Activated B cell treated with CpG ODN at 0.5 μM for 24 hours (primary cell): ENCODE measurements at regions of chr7 and their contacts with region 1.

Region 1: GRCh38 chr7:94509879-94510581 is 421 bp downstream of the CASD1 start:
- DNase-seq: peak; percentile 73
- ATAC-seq: peak; percentile 80
- H3K4me3 Mint-ChIP-seq: peak overlapping the region; percentile 87
- H3K27ac Mint-ChIP-seq: peak overlapping the region; percentile 88
- H3K4me1 Mint-ChIP-seq: peaks cover 46% of the 10 kb centered on the region
- H3K27me3 Mint-ChIP-seq: no peaks in the 10 kb centered on the region
- CTCF ChIP-seq: no peak

Region 2: GRCh38 chr7:94160719-94161435 is 349.2 kb before region 1 on chr7:
- CTCF ChIA-PET with region 1: no interaction called
- POLR2A ChIA-PET with region 1: no interaction called
- intact Hi-C with region 1: loop called (anchors 10 kb)
- DNase-seq: no peak
- ATAC-seq: peak; percentile 79
- H3K4me3 Mint-ChIP-seq: peak overlapping the region; percentile 78
- H3K27ac Mint-ChIP-seq: peak overlapping the region; percentile 89
- H3K4me1 Mint-ChIP-seq: peaks cover 41% of the 10 kb centered on the region
- H3K27me3 Mint-ChIP-seq: no peaks in the 10 kb centered on the region
- CTCF ChIP-seq: no peak

Region 3: DNA sequence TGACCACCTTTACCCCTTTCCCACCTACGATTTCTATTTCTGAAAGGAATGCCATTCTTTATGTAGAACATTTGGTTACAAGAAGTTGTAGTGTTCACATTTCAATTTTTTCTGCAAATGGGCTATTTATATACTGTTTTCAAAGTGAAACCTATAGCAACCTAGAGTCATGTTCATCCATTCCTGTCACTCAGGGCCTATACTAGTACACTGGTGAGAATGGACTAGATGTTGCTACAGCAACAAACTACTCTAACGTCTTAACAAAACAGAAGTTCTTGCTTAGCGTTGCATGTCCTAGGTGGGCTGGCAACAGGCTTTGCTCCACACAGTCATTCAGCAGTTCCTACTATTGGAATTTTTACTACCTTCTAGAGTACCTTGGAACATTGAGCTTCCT is 15.9 kb after region 1 on chr7:
- CTCF ChIA-PET with region 1: no interaction called
- POLR2A ChIA-PET with region 1: no interaction called
- intact Hi-C with region 1: no loop called
- DNase-seq: no peak
- ATAC-seq: no peak
- H3K4me3 Mint-ChIP-seq: no peak overlapping the region
- H3K27ac Mint-ChIP-seq: no peak overlapping the region
- H3K4me1 Mint-ChIP-seq: no peaks in the 10 kb centered on the region
- H3K27me3 Mint-ChIP-seq: no peaks in the 10 kb centered on the region
- CTCF ChIP-seq: no peak

Region 4: GRCh38 chr7:94556028-94556427 is 46.0 kb after region 1 on chr7:
- CTCF ChIA-PET with region 1: no interaction called
- POLR2A ChIA-PET with region 1: no interaction called
- intact Hi-C with region 1: loop called (anchors 1 kb)
- DNase-seq: no peak
- ATAC-seq: peak; percentile 92
- H3K4me3 Mint-ChIP-seq: peak overlapping the region; percentile 25
- H3K27ac Mint-ChIP-seq: peak overlapping the region; percentile 9
- H3K4me1 Mint-ChIP-seq: peaks cover 37% of the 10 kb centered on the region
- H3K27me3 Mint-ChIP-seq: no peaks in the 10 kb centered on the region
- CTCF ChIP-seq: no peak

Region 5: DNA sequence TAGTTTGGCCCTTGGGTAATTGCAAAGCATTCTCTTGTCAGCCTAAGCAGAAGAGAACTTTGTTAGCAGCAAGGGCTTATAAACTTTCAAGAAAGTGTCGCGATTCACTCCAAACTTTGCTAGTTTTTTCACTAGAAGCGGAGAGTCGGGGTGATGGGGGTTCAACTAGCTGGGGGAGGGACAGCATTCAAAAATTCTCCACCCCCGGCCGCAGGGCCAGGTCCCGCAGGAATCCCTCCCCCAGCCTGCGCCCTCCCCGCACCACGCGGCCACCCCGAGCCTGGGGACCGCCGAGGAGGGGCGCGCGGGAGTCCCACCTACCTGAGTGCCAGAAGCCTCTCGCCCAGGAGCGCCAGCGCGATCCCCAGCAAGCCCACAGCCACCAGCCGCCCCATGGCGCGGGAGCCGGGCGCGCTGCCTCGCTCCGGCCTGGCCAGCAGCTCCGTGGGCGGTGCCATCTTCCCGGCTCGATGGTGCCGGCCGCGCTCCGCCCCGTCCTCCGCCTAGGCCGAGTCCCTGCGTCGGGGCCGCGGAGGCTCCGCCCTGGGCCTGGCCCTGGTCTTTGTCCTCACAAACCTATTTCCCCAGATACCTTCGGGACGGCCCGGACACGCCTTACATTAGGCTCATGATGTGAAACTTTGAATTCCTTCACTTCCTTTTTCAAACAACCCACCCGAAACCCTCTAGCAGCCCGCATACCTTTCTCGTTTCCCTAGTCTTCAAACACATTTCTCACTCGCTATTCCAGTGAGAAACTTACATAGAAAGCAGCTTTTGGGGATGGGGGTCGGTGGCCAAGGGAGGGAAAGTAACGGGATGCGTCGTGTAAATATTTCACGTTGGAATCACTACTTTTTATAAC is 924.8 kb after region 1 on chr7 and contains the start of gene PON2:
- CTCF ChIA-PET with region 1: no interaction called
- POLR2A ChIA-PET with region 1: no interaction called
- intact Hi-C with region 1: loop called (anchors 10 kb)
- DNase-seq: peak; percentile 54
- ATAC-seq: peak; percentile 93
- H3K4me3 Mint-ChIP-seq: peak within 1 kb of the TSS; percentile 77
- H3K27ac Mint-ChIP-seq: peak within 1 kb of the TSS; percentile 38
- H3K4me1 Mint-ChIP-seq: peaks cover 20% of the 10 kb centered on the region
- H3K27me3 Mint-ChIP-seq: no peaks in the 10 kb centered on the region
- CTCF ChIP-seq: no peak
- total RNA-seq, gene PON2: 5.0 and 9.2 TPM in 2 replicates